Activated CD4-positive, alpha-beta T cell treated with anti-CD3 and anti-CD28 coated beads, Interleukin-2, amount 10 ng/mL, durations not matched to agents 24 days and 14 days (primary cell): ENCODE measurements at regions of chr12 and their contacts with region 1.

Region 1: GRCh38 chr12:128823916-128824839 is at the start of gene SLC15A4:
- DNase-seq: peak; percentile 99
- H3K4me3 Mint-ChIP-seq: peak within 1 kb of the TSS; percentile 90
- H3K27ac Mint-ChIP-seq: peak within 1 kb of the TSS; percentile 86
- H3K4me1 Mint-ChIP-seq: peaks cover 30% of the 10 kb centered on the region
- H3K27me3 Mint-ChIP-seq: no peaks in the 10 kb centered on the region
- total RNA-seq, gene SLC15A4: 31.0 and 36.8 TPM in 2 replicates

Region 2: DNA sequence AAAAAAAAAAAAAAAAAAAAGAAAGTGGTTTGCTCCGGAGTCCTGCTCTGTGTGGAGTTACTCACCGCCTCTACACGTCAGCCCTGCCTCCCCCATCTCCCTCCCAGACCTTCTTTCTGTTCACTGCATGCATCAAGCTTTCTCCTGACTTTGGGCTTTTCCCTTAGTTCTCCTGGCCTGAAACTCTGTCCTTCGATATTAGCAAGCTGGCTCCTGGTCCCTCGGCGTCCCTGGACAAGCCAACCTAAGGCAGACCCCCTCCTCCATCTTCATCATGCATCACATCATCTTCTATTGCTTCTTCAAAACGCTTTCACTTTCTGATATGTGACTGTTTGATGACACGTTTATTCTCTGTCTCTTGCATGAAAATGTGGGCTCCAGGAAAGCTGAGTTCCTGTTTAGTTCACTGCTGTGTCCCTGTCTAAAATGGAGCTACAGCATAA is 41.0 kb before region 1 on chr12:
- intact Hi-C with region 1: loop called (anchors 5 kb)
- DNase-seq: peak; percentile 68
- H3K4me3 Mint-ChIP-seq: peak overlapping the region; percentile 53
- H3K27ac Mint-ChIP-seq: peak overlapping the region; percentile 86
- H3K4me1 Mint-ChIP-seq: peaks cover 6% of the 10 kb centered on the region
- H3K27me3 Mint-ChIP-seq: no peaks in the 10 kb centered on the region

Region 3: DNA sequence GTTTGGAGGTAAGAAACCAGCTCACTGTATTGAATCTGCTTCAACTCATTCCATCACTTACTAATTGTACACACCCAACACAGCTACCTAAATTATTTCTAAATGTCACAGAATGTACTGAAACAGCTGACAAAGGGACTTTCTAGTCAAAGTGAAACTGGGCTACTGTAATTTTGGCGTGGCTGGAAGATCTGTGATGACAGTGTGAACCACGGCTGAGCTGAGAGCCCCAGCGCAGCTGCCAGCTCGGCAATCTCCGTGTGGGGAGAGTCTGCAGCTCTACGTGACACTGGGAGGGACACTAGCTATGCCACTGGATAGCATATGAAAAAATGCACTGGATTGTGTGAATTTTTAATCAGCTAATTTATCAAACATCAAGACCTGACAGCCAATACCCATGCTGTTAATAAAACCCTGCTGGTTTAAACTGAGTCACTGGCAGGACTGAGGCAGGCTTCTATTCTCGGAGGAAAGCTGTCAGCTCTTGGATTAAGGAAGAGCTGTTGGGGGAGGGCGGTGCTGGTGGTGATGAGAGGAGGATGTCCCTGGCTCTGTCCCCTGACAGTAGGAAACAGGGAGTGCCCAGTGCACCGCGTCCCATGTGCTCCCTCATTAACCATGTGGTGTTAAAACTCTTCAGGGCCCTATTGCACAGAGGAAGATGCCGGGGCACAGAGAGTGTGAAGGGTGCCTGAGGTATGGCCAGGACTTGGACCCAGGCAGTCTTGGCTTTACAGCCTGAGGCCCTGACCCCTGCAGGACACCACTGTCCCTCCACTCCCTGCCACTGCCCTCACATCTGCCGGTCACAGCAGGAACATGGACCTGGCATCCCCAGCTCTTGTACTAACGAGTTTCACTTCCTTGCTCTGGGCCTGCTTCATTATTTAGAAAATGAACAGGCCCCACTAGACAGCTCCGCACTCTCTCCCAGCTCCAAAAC is 13.7 kb before region 1 on chr12:
- intact Hi-C with region 1: loop called (anchors 1 kb)
- DNase-seq: peak; percentile 84
- H3K4me3 Mint-ChIP-seq: peak overlapping the region; percentile 73
- H3K27ac Mint-ChIP-seq: peak overlapping the region; percentile 82
- H3K4me1 Mint-ChIP-seq: peaks cover 51% of the 10 kb centered on the region
- H3K27me3 Mint-ChIP-seq: no peaks in the 10 kb centered on the region

Region 4: GRCh38 chr12:128914908-128915563 is 90.9 kb after region 1 on chr12:
- intact Hi-C with region 1: loop called (anchors 1 kb)
- DNase-seq: peak; percentile 91
- H3K4me3 Mint-ChIP-seq: peak overlapping the region; percentile 48
- H3K27ac Mint-ChIP-seq: peak overlapping the region; percentile 73
- H3K4me1 Mint-ChIP-seq: peaks cover 43% of the 10 kb centered on the region
- H3K27me3 Mint-ChIP-seq: no peaks in the 10 kb centered on the region

Region 5: GRCh38 chr12:130818635-130819576 is 1994.7 kb after region 1 on chr12:
- intact Hi-C with region 1: loop called (anchors 10 kb)
- DNase-seq: peak; percentile 94
- H3K4me3 Mint-ChIP-seq: peak overlapping the region; percentile 83
- H3K27ac Mint-ChIP-seq: peak overlapping the region; percentile 53
- H3K4me1 Mint-ChIP-seq: peaks cover 4% of the 10 kb centered on the region
- H3K27me3 Mint-ChIP-seq: no peaks in the 10 kb centered on the region